Naive thymus-derived CD4-positive, alpha-beta T cell (primary cell): ENCODE measurements at regions of chr5 and their contacts with region 1.

Region 1: DNA sequence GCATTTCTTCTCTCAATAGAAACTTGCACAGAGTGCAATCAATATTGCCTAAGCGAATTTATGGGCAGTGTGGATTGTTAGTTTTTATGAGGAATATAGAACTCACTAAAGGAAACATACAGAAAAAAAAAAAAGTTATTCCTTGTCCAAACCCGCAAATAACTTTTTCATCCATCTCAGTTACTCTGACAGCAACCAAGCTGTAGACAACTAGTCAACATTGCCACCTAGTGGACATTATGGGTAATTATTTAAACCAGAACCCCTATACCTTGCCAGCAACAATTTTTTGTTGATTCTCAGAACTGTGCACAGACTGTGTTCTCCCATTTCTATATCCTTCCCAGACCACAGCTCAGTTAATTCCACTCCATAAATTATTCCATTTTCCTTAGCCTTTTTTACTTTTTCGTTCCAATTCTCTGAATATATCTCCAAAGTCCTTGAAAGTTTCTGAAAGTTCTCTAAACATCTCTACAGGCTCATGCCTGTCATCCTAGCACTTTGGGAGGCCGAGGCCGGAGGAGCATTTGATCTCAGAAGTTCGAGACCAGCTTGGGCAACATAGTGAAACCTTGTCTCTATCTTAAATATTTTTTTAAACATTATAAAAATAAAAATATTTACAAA is 2.6 kb upstream of the AFAP1L1 start:
- DNase-seq: peak in 7 of 9 donors; percentile 40 to 67 (median 57)
- ATAC-seq: peak; percentile 70
- H3K4me3 ChIP-seq: no peak overlapping the region
- H3K4me3 Mint-ChIP-seq: peak overlapping the region in 2 of 10 donors; percentile 3 to 10
- H3K27ac ChIP-seq: no peak overlapping the region
- H3K27ac Mint-ChIP-seq: peak overlapping the region in 1 of 9 donors; percentile 2
- H3K4me1 ChIP-seq: peaks cover 0 to 6% of the 10 kb centered on the region in 2 donors
- H3K4me1 Mint-ChIP-seq: peaks cover 7 to 22% (median 16%) of the 10 kb centered on the region in 7 donors
- H3K27me3 ChIP-seq: peaks cover 0 to 3% of the 10 kb centered on the region in 2 donors
- H3K27me3 Mint-ChIP-seq: peaks cover 17 to 67% (median 31%) of the 10 kb centered on the region in 5 donors

Region 2: DNA sequence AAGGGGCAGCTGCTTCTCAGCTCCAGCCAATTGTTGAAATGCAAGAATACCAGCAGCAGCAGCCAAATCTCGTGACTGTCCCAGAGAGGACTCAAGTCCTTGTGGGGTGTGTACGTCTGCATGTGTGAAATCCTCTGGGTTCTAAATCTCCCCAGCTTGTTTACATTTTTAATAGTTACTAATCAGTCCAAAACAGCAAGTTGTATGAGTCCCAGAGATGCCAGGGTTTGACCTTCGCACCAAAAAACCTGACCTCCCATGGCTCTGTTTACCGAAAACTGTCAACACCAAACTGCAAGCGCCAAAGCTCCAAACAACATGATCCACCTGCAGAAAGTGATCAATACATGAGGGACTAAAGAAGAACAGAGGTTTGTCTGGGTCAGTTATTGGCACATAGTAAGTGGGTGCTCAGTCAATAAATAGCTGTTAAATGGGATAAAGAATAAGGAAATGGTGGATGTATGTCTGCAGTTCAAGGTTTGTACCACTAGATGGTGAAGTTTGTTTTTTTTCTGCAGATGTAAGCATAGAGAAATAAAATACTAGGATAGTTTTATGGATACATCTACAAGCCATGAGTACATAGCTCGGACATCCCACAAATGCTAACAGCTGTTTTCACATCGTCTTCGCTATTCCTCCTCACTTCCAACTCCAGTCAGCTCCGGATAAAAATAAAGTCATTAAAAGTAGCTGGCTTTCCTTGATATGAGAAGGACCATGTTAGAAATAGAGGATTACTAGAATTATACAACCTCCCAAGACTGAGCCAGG is 527.9 kb before region 1 on chr5:
- CTCF ChIA-PET with region 1: interaction called, 9 read pairs
- POLR2A ChIA-PET with region 1: no interaction called
- intact Hi-C with region 1: loop called in 1 of 2 experiments (anchors 1 kb)
- DNase-seq: peak in 4 of 9 donors; percentile 12 to 30 (median 22)
- ATAC-seq: peak; percentile 65
- H3K4me3 ChIP-seq: no peak overlapping the region
- H3K4me3 Mint-ChIP-seq: no peak overlapping the region
- H3K27ac ChIP-seq: no peak overlapping the region
- H3K27ac Mint-ChIP-seq: no peak overlapping the region
- H3K4me1 ChIP-seq: no peaks in the 10 kb centered on the region
- H3K4me1 Mint-ChIP-seq: peaks cover 0 to 5% (median 0%) of the 10 kb centered on the region in 7 donors
- H3K27me3 ChIP-seq: no peaks in the 10 kb centered on the region
- H3K27me3 Mint-ChIP-seq: peaks cover 17 to 37% (median 26%) of the 10 kb centered on the region in 5 donors

Region 3: DNA sequence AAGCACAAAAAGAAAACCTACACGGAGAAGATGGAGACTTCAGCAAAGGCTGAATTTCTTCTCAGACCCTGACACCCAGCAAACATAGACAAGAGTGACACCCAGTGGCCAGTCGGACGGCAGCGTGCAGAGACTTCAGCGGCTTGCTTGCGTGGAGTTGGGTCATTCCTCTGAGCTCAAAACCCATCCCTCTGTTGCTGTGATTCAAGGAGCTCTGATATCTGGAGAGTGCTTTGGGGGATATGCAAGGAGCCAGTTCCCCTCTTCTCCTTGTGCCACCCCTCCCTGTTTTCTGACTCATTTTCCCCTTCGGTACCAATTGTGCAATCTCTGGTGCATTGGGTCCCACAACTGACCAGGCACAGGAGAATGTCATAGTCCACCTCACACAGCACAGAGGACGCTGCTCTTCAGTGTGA is 233.7 kb before region 1 on chr5:
- CTCF ChIA-PET with region 1: interaction called, 3 read pairs
- POLR2A ChIA-PET with region 1: no interaction called
- intact Hi-C with region 1: loop called in 1 of 2 experiments (anchors 1 kb)
- DNase-seq: peak; percentile 26 to 65 (median 52)
- ATAC-seq: peak; percentile 80
- H3K4me3 ChIP-seq: no peak overlapping the region
- H3K4me3 Mint-ChIP-seq: no peak overlapping the region
- H3K27ac ChIP-seq: no peak overlapping the region
- H3K27ac Mint-ChIP-seq: no peak overlapping the region
- H3K4me1 ChIP-seq: no peaks in the 10 kb centered on the region
- H3K4me1 Mint-ChIP-seq: peaks cover 0 to 19% (median 0%) of the 10 kb centered on the region in 7 donors
- H3K27me3 ChIP-seq: no peaks in the 10 kb centered on the region
- H3K27me3 Mint-ChIP-seq: peaks cover 0 to 9% (median 5%) of the 10 kb centered on the region in 5 donors

Region 4: DNA sequence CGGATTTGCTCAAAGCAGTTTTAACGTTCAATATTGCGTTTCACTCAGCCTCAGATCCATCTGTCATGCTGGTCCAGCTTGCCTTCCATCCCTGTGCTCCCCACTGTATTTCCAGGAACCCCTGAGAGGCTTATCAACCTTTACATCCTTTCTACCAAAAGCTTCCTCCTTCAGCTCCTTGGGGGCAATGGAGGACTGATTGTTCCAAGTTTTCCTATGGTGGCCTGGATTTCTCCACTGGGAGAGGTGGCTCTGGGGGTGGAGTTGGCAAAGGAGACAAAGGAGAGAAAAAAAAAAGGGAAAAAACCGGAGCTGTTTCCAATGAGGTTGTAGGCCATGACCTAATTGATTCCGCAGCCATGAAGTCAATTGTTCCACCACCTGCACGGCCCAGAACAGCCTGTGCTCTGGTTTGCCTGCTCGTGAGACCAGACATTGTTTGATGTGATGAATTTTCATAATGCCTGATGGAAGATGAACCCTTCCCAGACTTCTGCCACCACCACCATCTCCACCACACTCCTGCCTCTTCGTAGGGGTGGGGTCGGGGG is 73.6 kb before region 1 on chr5:
- CTCF ChIA-PET with region 1: interaction called, 3 read pairs
- POLR2A ChIA-PET with region 1: no interaction called
- intact Hi-C with region 1: loop called in 1 of 2 experiments (anchors 5 kb)
- DNase-seq: no peak
- ATAC-seq: no peak
- H3K4me3 ChIP-seq: no peak overlapping the region
- H3K4me3 Mint-ChIP-seq: no peak overlapping the region
- H3K27ac ChIP-seq: no peak overlapping the region
- H3K27ac Mint-ChIP-seq: peak overlapping the region in 1 of 9 donors; percentile 54
- H3K4me1 ChIP-seq: no peaks in the 10 kb centered on the region
- H3K4me1 Mint-ChIP-seq: peaks cover 0 to 3% (median 0%) of the 10 kb centered on the region in 7 donors
- H3K27me3 ChIP-seq: peaks cover 0 to 3% of the 10 kb centered on the region in 2 donors
- H3K27me3 Mint-ChIP-seq: peaks cover 0 to 9% (median 0%) of the 10 kb centered on the region in 5 donors

Region 5: DNA sequence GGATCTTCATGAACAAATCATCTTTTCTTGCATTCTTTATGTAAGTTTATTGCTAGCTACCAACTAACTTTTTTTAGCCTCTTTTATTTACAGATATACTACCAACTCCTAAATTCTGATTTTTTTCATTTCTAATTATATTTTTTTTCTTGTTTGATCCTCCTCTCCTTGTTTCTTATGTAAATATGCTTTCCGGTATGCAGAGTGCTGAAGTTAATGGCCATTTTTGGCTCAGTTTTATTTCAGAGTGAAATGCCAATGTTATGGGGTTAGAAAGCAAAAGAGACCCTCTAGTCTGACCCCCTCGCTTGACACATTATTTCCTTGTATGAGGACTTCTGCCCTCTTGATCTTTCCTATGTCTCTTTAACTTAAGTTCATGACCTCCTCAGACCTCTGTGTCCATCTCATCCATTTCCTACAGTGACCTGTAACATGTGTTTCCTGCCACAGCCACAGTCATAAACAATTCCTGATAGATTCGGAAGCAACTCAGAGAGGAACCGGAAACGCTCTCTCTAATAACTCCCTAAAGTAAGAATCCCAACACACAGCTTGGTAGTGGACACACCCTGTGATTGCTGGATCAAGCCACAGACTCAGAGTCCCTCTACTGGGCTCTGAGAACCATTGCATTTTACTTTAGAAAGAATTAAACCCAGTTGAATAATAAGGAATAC is 40.3 kb before region 1 on chr5:
- CTCF ChIA-PET with region 1: interaction called, 3 read pairs
- POLR2A ChIA-PET with region 1: no interaction called
- intact Hi-C with region 1: loop called (anchors 2 to 5 kb)
- DNase-seq: no peak
- ATAC-seq: no peak
- H3K4me3 ChIP-seq: no peak overlapping the region
- H3K4me3 Mint-ChIP-seq: no peak overlapping the region
- H3K27ac ChIP-seq: no peak overlapping the region
- H3K27ac Mint-ChIP-seq: no peak overlapping the region
- H3K4me1 ChIP-seq: no peaks in the 10 kb centered on the region
- H3K4me1 Mint-ChIP-seq: peaks cover 0 to 4% (median 2%) of the 10 kb centered on the region in 7 donors
- H3K27me3 ChIP-seq: no peaks in the 10 kb centered on the region
- H3K27me3 Mint-ChIP-seq: peaks cover 0 to 13% (median 6%) of the 10 kb centered on the region in 5 donors

Region 6: GRCh38 chr5:149367249-149367971 is 98.4 kb after region 1 on chr5:
- CTCF ChIA-PET with region 1: interaction called, 3 read pairs
- POLR2A ChIA-PET with region 1: no interaction called
- intact Hi-C with region 1: loop called in 1 of 2 experiments (anchors 1 kb)
- DNase-seq: peak in 7 of 9 donors; percentile 25 to 65 (median 49)
- ATAC-seq: peak; percentile 79
- H3K4me3 ChIP-seq: no peak overlapping the region
- H3K4me3 Mint-ChIP-seq: no peak overlapping the region
- H3K27ac ChIP-seq: no peak overlapping the region
- H3K27ac Mint-ChIP-seq: peak overlapping the region in 7 of 9 donors; percentile 13 to 68 (median 41)
- H3K4me1 ChIP-seq: peaks cover 0 to 7% of the 10 kb centered on the region in 2 donors
- H3K4me1 Mint-ChIP-seq: peaks cover 3 to 48% (median 27%) of the 10 kb centered on the region in 7 donors
- H3K27me3 ChIP-seq: no peaks in the 10 kb centered on the region
- H3K27me3 Mint-ChIP-seq: no peaks in the 10 kb centered on the region

Region 7: GRCh38 chr5:149381987-149382340 is 112.9 kb after region 1 on chr5:
- CTCF ChIA-PET with region 1: no interaction called
- POLR2A ChIA-PET with region 1: no interaction called
- intact Hi-C with region 1: no loop called
- DNase-seq: peak; percentile 41 to 76 (median 62)
- ATAC-seq: peak; percentile 85
- H3K4me3 ChIP-seq: no peak overlapping the region
- H3K4me3 Mint-ChIP-seq: peak overlapping the region in 1 of 10 donors; percentile 46
- H3K27ac ChIP-seq: no peak overlapping the region
- H3K27ac Mint-ChIP-seq: no peak overlapping the region
- H3K4me1 ChIP-seq: no peaks in the 10 kb centered on the region
- H3K4me1 Mint-ChIP-seq: peaks cover 0 to 5% (median 4%) of the 10 kb centered on the region in 7 donors
- H3K27me3 ChIP-seq: no peaks in the 10 kb centered on the region
- H3K27me3 Mint-ChIP-seq: no peaks in the 10 kb centered on the region